Body of pancreas (tissue), 4 donors: ENCODE measurements at regions of chr12 and their contacts with region 1.

Region 1: DNA sequence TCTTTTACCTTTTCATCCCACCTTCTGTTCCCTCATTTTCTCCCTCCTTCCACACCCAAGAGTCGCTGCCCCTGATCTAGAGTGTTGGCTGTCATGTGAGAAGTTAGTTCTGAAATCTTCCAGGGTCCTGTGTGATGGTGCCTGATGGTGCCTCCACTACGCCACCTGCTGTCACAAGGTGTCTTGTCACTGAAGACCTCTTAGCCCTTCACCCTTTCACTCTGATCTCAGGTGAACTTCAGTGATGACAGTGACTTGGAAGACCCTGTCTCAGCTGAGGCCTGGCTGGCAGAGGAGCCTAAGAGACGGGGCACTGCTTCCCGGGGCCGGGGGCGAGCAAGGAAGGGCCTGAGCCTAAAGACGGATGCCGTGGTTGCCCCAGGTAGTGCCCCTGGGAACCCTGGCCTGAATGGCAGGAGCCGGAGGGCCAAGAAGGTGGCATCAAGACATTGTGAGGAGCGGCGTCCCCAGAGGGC is 7.6 kb upstream of the PFDN5 start:
- DNase-seq: peak; percentile 72 to 81 (median 76)
- ATAC-seq: peak; percentile 75
- H3K4me3 ChIP-seq: no peak overlapping the region
- H3K27ac ChIP-seq: no peak overlapping the region
- H3K4me1 ChIP-seq: no peaks in the 10 kb centered on the region
- H3K27me3 ChIP-seq: no peaks in the 10 kb centered on the region
- CTCF ChIP-seq: peak; percentile 37 to 78 (median 74)
- POLR2A ChIP-seq: no peak

Region 2: DNA sequence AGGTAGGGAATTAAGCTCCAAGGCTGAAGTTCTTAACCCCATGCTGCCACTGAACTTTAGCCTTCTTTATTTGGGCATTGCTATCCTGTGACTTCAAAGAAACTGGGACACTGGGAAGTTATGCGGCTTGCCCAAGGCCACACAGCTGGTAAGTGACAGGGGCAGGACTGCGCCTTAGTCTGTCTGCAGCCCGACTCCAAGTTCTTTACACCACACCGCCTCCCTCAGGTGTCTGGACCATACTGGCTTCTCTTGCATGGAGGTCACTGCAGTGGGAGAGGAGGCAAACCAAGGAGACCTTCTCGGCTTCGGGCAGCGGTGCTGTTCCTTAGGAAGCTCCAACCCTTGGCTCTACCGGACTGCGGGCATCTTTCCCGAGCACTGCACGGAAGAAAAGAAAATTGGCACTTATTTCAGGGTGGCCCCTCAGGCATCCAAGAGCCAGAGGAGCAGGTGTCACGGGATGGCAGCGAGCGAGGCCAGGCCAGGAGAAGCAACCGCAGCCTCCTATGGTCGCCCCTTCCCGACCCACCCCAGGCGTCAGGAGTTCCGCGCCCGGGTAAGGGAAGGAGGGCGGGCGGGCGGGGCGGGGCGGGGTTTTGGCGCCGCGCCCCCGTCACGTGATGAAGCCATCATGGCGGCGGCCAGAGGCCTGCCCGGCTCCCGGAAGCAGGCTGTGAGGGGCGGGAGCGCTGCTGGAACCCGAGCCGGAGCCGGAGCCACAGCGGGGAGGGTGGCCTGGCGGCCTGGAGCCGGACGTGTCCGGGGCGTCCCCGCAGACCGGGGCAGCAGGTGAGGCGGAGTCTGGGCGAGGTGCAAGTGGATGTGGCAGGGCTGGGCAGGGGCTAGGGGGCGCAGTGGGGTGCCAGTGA is 36.1 kb before region 1 on chr12:
- intact Hi-C with region 1: loop called (anchors 5 kb)
- DNase-seq: peak; percentile 79 to 89 (median 86)
- ATAC-seq: peak; percentile 88
- H3K4me3 ChIP-seq: peak overlapping the region; percentile 80 to 89
- H3K27ac ChIP-seq: peak overlapping the region; percentile 80 to 93 (median 90)
- H3K4me1 ChIP-seq: peaks cover 33% of the 10 kb centered on the region
- H3K27me3 ChIP-seq: no peaks in the 10 kb centered on the region
- CTCF ChIP-seq: peak in 6 of 7 experiments; percentile 6 to 57 (median 56)
- POLR2A ChIP-seq: peak in 2 of 3 donors; percentile 63 to 64

Region 3: DNA sequence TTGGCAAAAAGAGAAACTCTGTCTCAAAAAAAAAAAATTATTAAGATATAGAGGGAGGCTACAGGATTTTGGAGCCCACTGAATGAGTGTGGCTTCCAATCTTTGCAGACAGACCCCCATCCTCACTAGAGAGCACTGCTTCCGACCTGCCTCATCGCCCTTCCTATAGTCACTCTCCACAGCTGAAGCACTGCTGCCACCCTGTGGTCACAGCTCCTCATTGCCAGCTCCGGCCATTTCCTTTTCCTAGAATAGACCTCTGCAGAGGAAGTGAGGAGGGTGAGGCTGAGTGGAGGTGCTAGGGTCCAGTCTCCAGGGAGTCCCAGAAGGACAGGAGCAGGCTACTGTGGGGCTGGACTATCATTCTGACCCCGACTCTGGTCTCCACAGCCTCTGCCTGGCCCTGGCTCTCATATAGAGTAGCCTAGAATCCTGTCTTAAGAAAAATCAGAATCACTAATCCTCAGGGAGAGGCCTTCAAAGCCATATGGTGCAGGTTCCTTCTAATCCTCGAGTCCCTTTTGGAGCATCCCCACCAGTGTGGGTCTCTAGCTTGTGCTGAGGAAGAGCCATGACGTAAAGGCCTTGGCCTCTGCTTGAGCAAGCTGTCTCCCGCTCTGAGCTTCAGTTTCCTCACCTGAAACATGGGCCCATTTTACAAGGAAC is 220.9 kb after region 1 on chr12:
- intact Hi-C with region 1: no loop called
- DNase-seq: peak; percentile 85 to 89 (median 88)
- ATAC-seq: peak; percentile 96
- H3K4me3 ChIP-seq: no peak overlapping the region
- H3K27ac ChIP-seq: peak overlapping the region in 2 of 4 donors; percentile 23 to 34
- H3K4me1 ChIP-seq: peaks cover 8% of the 10 kb centered on the region
- H3K27me3 ChIP-seq: no peaks in the 10 kb centered on the region
- CTCF ChIP-seq: peak; percentile 72 to 94 (median 92)
- POLR2A ChIP-seq: no peak